PC-9 (cell line): ENCODE measurements at regions of chr6 and their contacts with region 1.

Region 1: DNA sequence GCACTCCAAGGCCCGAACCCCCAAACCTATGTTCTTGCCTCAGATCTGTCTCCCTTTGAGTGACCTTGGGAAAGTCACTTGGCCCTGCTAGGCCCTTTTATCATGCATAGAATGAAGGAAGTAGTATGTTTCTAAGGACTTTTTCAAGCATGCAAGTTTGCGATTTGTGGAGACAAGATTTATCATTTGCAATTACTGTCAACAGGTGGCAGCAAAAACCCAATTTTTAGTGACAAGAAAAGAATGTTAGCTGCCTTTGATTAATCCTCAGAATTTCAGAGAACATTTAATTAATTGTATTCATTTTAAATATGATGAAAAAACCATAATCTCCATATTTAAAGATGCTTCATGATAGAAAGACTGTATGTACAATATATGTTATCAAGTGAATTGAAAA is 28.3 kb upstream of the PREP start:
- DNase-seq: peak; percentile 25 to 58
- H3K4me3 ChIP-seq: no peak overlapping the region
- H3K27ac ChIP-seq: no peak overlapping the region
- H3K4me1 ChIP-seq: peaks cover 52% of the 10 kb centered on the region
- H3K27me3 ChIP-seq: no peaks in the 10 kb centered on the region
- CTCF ChIP-seq: peak; percentile 84

Region 2: DNA sequence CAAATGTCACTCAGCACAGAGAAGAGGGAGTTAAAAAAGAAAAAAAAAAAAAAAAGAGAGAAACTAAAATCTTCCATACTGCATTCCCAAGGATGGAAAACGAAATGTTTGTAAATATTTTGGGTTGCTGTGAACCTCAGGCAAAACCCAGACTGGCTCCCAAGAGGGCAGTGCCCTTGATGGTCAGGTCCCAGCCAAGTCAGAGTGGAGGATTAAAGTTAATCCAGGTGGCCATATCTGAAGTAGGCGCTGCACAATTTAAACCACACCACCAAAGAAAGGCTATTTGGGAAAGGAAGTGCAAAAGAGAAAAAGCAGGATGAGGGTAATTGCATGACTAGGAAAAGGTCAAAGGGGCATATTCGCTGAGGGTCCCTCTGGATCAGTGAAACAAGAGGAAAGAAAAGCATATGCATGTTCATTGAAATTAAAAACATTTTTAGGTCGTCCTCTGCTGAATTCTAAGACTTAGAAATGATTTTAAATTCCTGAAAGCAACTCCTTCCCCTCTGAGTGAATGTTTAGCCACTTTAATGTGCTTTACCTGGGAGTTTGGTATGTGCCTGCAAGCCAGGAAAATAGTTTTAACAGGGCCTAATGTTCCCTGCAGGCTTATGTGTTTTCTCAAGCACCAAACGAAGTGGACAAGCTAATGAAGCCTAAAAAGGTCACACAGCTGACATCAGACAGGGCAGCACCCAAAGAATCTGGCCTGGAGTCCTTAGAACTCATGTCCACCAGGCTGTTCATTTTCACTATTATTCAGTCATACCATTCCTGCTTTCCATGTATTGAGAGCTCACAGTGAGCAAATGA is 730.6 kb before region 1 on chr6:
- CTCF ChIA-PET with region 1: no interaction called
- POLR2A ChIA-PET with region 1: no interaction called
- intact Hi-C with region 1: no loop called
- DNase-seq: no peak
- H3K4me3 ChIP-seq: no peak overlapping the region
- H3K27ac ChIP-seq: no peak overlapping the region
- H3K4me1 ChIP-seq: no peaks in the 10 kb centered on the region
- H3K27me3 ChIP-seq: no peaks in the 10 kb centered on the region
- CTCF ChIP-seq: no peak

Region 3: DNA sequence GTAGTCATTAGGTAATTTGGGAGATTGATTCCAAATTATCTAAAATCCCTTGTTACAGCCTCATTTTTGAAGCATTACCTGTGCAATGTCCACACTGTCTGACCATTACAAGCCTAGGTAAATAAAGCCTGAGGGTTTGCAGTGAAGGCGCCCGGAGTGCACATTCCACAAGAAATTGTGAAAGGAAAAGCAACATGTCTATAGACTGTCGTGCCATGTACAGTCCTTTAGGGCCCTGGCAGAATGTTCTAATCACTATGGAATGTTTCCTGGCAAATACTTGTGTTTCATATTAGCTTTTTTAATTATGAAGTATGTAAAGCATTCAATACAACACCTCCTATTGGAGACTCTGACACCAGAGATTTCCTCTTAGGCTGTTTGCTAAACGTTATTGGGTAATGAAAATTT is 57.2 kb before region 1 on chr6:
- CTCF ChIA-PET with region 1: interaction called, 12 read pairs
- POLR2A ChIA-PET with region 1: no interaction called
- intact Hi-C with region 1: no loop called
- DNase-seq: peak; percentile 72 to 100
- H3K4me3 ChIP-seq: peak overlapping the region; percentile 6; the same call in 1 of the 2 replicates
- H3K27ac ChIP-seq: peak overlapping the region; percentile 86
- H3K4me1 ChIP-seq: peaks cover 38% of the 10 kb centered on the region
- H3K27me3 ChIP-seq: no peaks in the 10 kb centered on the region
- CTCF ChIP-seq: 0 out of 2 replicates have a peak, but pooled peaks have one; percentile 21

Region 4: DNA sequence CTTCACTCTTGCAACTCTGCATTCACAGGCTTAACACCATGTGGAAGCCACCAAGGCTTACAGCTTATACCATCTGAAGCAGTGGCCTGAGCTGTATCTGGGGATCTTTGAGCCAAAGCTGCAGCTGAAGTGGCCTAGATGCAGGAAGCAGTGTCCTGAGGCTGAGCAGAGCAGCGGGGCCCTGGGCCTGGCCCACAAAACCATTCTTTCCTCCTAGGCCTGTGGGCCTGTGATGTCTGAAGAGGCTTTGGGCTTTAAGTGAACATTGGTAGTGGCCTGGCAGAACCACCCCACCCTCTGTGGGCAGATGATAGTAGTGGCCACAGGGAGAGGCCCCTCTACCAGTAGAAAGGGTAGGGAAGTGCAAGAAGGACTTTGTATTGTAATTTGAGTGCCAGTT is 21.5 kb before region 1 on chr6:
- CTCF ChIA-PET with region 1: no interaction called
- POLR2A ChIA-PET with region 1: no interaction called
- intact Hi-C with region 1: no loop called
- DNase-seq: no peak
- H3K4me3 ChIP-seq: no peak overlapping the region
- H3K27ac ChIP-seq: no peak overlapping the region
- H3K4me1 ChIP-seq: no peaks in the 10 kb centered on the region
- H3K27me3 ChIP-seq: no peaks in the 10 kb centered on the region
- CTCF ChIP-seq: no peak

Region 5: DNA sequence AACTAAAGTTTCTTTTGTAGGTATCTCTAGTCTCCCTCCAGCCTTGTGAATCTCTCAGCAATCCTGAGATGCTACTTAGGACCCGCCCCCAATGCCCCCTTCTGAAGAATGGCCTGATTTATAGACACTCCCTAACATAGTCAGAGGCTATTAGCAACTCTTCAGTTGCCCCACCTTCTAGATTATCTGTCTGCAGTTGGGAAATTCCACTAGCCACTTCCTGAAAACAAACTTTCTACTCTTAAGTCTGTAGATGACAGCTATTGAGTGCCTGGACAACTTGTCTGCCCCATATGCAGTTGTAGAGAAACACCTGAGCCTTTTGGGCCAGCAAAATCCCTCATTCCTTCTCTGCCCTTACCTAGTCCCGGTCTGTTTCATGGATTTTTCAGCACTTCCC is 159.8 kb after region 1 on chr6:
- CTCF ChIA-PET with region 1: no interaction called
- POLR2A ChIA-PET with region 1: no interaction called
- intact Hi-C with region 1: loop called (anchors 10 kb)
- DNase-seq: peak in 1 of 2 experiments; percentile 43
- H3K4me3 ChIP-seq: no peak overlapping the region
- H3K27ac ChIP-seq: no peak overlapping the region
- H3K4me1 ChIP-seq: peaks cover 22% of the 10 kb centered on the region
- H3K27me3 ChIP-seq: no peaks in the 10 kb centered on the region
- CTCF ChIP-seq: no peak

Region 6: GRCh38 chr6:105780146-105780860 is 349.1 kb after region 1 on chr6:
- CTCF ChIA-PET with region 1: no interaction called
- POLR2A ChIA-PET with region 1: no interaction called
- intact Hi-C with region 1: loop called (anchors 1 kb)
- DNase-seq: peak; percentile 60 to 99
- H3K4me3 ChIP-seq: no peak overlapping the region; the same call in 1 of the 2 replicates
- H3K27ac ChIP-seq: peak overlapping the region; percentile 71
- H3K4me1 ChIP-seq: peaks cover 24% of the 10 kb centered on the region
- H3K27me3 ChIP-seq: no peaks in the 10 kb centered on the region
- CTCF ChIP-seq: no peak

Region 7: DNA sequence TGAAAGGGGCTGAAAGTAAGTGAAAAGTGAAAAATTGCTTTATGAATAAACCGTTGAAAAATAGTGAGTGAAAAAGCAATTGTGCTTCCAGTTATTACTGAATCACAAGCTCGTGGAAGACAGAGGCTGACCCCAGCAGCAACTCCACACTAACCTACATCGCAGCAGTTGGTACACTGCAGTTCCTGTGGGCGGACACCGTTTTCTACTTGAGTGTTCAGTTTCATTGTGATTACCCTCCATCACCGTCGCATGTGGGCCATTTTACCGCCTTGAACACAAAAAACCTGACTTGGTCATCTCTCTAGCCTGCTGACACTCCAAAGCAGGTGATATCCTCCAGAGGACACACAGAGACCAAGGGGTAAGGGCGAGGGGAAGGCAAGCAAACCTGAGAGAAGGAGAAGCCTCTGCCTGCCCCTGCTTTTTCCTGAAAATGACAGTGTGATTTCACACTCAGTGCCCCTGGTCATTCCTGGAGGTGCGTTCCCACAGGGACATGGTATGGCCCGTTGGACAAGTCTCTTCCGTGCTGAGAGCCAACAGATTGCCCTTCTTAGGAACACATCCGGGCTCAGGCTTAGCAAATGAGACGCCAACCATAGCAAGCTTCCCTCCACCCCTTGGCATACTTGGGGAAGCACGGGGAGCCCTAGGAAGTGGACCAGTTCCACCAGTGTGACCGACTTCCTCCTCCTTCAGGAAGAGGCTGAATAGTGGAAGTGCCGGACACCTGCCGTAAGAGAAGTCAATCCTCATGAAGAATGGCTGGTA is 683.5 kb after region 1 on chr6:
- CTCF ChIA-PET with region 1: no interaction called
- POLR2A ChIA-PET with region 1: interaction called, 6 read pairs
- intact Hi-C with region 1: loop called (anchors 1 kb)
- DNase-seq: no peak
- H3K4me3 ChIP-seq: no peak overlapping the region
- H3K27ac ChIP-seq: no peak overlapping the region
- H3K4me1 ChIP-seq: peaks cover 13% of the 10 kb centered on the region
- H3K27me3 ChIP-seq: no peaks in the 10 kb centered on the region
- CTCF ChIP-seq: no peak

Region 8: DNA sequence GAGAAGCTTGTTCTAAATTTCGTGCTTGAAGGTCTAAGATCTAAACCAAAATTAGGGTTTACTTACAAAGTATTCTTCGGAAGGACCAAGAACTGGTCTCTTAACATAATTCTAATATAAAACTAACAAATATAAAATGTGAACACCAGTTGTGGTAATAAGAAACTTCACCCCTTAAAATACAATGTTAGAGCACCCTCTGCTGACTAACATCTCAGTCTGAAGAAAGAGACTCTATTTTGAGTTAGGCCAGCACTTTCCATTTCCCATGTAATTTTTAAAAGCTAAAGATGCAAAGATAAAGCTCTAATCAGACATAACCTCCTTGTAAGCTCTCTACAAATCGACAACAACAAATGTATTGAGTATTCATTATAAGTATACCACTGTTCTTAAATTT is 869.7 kb after region 1 on chr6:
- CTCF ChIA-PET with region 1: interaction called, 4 read pairs
- POLR2A ChIA-PET with region 1: no interaction called
- intact Hi-C with region 1: loop called (anchors 2 kb)
- DNase-seq: no peak
- H3K4me3 ChIP-seq: no peak overlapping the region
- H3K27ac ChIP-seq: no peak overlapping the region
- H3K4me1 ChIP-seq: no peaks in the 10 kb centered on the region
- H3K27me3 ChIP-seq: no peaks in the 10 kb centered on the region
- CTCF ChIP-seq: peak; percentile 75

Region 9: GRCh38 chr6:106444777-106445507 is 1013.7 kb after region 1 on chr6:
- CTCF ChIA-PET with region 1: no interaction called
- POLR2A ChIA-PET with region 1: no interaction called
- intact Hi-C with region 1: loop called (anchors 10 kb)
- DNase-seq: peak; percentile 15 to 69
- H3K4me3 ChIP-seq: no peak overlapping the region
- H3K27ac ChIP-seq: no peak overlapping the region
- H3K4me1 ChIP-seq: peaks cover 24% of the 10 kb centered on the region
- H3K27me3 ChIP-seq: no peaks in the 10 kb centered on the region
- CTCF ChIP-seq: peak; percentile 89